Colonic mucosa (tissue), 4 donors: ENCODE measurements at regions of chrX and their contacts with region 1.

Region 1: DNA sequence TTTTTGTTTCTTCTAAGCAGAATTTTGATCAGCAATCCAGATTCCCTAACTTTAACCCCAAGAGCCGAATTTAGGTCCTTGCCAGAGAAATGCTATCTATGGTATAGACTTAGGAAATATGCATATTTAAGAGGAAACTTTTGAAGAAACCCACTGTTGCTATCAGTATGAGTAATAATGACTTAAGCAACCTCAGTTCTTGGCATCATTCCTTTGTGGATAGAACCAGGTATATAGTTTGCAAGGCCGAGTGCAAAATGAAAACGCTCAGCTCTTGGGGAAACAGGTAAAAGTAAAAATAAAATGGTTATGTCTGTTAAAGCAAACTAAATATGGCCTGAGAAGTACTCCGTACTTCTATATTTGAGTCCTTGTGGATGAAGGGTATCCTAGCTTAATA is 78.1 kb downstream of the ARSF start:
- DNase-seq: no peak
- H3K4me3 ChIP-seq: no peak overlapping the region
- H3K27ac ChIP-seq: no peak overlapping the region
- H3K4me1 ChIP-seq: no peaks in the 10 kb centered on the region
- H3K27me3 ChIP-seq: no peaks in the 10 kb centered on the region
- CTCF ChIP-seq: no peak

Region 2: DNA sequence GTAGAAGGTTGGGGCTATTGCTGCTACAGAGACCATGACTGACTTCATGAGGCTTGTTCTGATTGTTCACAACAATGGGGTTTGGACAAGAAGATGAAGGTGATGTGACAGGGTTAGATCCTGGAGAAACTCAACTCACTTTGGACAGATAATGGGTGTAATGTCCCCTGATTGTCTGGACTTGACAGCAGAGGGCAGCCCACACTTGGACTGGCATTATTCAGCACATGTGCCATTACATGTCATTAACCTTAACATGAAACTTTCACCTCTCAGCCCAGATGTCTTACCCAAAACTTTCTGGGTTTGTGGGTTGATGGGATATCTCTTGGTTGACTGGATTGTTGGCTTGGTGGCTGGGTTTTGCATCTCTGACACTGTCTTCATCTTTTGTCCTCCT is 125.6 kb after region 1 on chrX:
- intact Hi-C with region 1: no loop called
- DNase-seq: no peak
- H3K4me3 ChIP-seq: no peak overlapping the region
- H3K27ac ChIP-seq: no peak overlapping the region
- H3K4me1 ChIP-seq: no peaks in the 10 kb centered on the region
- H3K27me3 ChIP-seq: no peaks in the 10 kb centered on the region
- CTCF ChIP-seq: no peak

Region 3: DNA sequence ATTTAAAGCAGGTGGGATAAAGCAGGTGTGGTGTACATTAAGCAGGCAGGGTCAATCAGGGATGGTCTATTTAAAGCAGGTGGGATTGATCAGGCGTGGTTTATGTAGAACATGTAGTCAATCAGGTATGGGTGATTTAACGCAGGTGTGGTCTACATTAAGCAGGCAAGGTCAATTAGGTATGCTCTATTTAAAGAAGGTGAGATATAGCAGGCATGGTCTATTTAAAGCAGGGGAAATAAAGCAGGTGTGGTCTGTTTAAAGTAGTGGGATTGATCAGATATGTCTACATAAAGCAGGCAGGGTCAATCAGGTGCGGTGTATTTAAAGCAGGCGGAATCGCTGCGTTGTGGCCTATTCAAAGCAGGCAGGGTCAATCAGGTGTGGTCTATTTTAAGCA is 315.7 kb after region 1 on chrX:
- intact Hi-C with region 1: no loop called
- DNase-seq: no peak
- H3K4me3 ChIP-seq: no peak overlapping the region
- H3K27ac ChIP-seq: no peak overlapping the region
- H3K4me1 ChIP-seq: no peaks in the 10 kb centered on the region
- H3K27me3 ChIP-seq: no peaks in the 10 kb centered on the region
- CTCF ChIP-seq: no peak

Region 4: GRCh38 chrX:3638280-3638873 is 519.0 kb after region 1 on chrX:
- intact Hi-C with region 1: loop called (anchors 5 kb)
- DNase-seq: peak; percentile 57
- H3K4me3 ChIP-seq: no peak overlapping the region
- H3K27ac ChIP-seq: no peak overlapping the region
- H3K4me1 ChIP-seq: no peaks in the 10 kb centered on the region
- H3K27me3 ChIP-seq: no peaks in the 10 kb centered on the region
- CTCF ChIP-seq: peak; percentile 74